Transverse colon (tissue), 4 donors: ENCODE measurements at regions of chr11 and their contacts with region 1.

Region 1: GRCh38 chr11:7688238-7688826 is 15.0 kb upstream of the CYB5R2 start:
- DNase-seq: no peak
- H3K4me3 ChIP-seq: no peak overlapping the region
- H3K27ac ChIP-seq: no peak overlapping the region
- H3K4me1 ChIP-seq: no peaks in the 10 kb centered on the region
- H3K27me3 ChIP-seq: peaks cover 14% of the 10 kb centered on the region
- CTCF ChIP-seq: peak; percentile 64 to 81 (median 76)
- EP300 ChIP-seq: no peak
- POLR2A ChIP-seq: no peak

Region 2: GRCh38 chr11:7115780-7116179 is 572.6 kb before region 1 on chr11:
- in situ Hi-C with region 1: loop called in 1 of 4 experiments (anchors 25 kb)
- intact Hi-C with region 1: no loop called
- DNase-seq: no peak
- H3K4me3 ChIP-seq: no peak overlapping the region
- H3K27ac ChIP-seq: no peak overlapping the region
- H3K4me1 ChIP-seq: no peaks in the 10 kb centered on the region
- H3K27me3 ChIP-seq: peaks cover 2% of the 10 kb centered on the region
- CTCF ChIP-seq: no peak
- EP300 ChIP-seq: no peak
- POLR2A ChIP-seq: no peak

Region 3: DNA sequence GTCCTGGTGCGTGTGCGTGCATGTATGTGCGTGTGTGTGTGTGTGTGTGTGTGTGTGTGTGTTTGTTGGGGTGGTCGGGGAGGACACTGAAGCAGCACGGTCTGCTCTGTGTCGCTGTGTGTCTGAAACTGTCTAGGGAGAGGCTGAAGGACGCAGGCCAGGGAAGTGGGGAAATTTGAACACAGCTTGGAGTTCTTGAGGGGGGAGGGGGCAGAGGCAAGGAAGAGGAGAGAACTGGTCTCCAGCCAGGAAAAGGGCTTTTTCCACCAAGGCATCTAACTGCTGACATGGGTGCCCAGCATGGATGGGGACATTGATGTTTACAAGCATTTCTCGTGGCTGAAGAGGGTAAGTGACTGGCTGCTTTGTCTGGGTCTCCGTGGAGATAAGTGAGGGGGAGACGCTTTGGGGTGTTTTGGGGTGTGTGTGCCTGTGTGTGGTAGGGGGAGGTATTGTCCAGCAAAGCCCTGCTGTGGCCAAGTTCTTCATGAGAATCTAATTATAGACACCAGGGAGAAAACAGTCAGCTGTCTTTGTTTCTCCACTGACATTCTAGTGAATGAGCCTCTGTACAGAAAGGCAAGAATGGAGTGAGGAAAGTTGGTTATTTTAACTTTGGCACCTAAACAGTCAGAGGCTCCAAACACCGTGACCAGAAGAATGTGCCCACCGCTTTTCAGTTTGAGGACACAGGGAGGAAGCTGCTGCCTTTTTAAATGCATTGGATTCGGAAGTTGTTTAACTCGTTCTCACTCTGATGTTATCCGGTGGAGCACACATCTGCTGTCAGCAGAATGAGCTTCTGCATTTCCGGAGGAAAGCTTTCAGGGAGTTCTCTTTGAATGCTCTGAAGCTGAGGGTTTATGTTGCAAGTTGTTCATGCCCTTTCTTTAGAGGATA is 110.8 kb before region 1 on chr11:
- in situ Hi-C with region 1: no loop called
- intact Hi-C with region 1: no loop called
- DNase-seq: peak; percentile 47
- H3K4me3 ChIP-seq: peak overlapping the region in 3 of 4 donors; percentile 3 to 35 (median 23)
- H3K27ac ChIP-seq: peak overlapping the region; percentile 86 to 92 (median 88)
- H3K4me1 ChIP-seq: peaks cover 37 to 79% (median 61%) of the 10 kb centered on the region in 4 donors
- H3K27me3 ChIP-seq: no peaks in the 10 kb centered on the region
- CTCF ChIP-seq: no peak
- EP300 ChIP-seq: no peak
- POLR2A ChIP-seq: peak; percentile 61